H1 (cell line): ENCODE measurements at regions of chr14 and their contacts with region 1.

Region 1: GRCh38 chr14:68795597-68796417 is 2.9 kb upstream of the ZFP36L1 start:
- DNase-seq: peak; percentile 86 to 87
- H3K4me3 ChIP-seq: peak overlapping the region; percentile 79 to 99 (median 94)
- H3K27ac ChIP-seq: peak overlapping the region; percentile 98
- H3K4me1 ChIP-seq: peaks cover 5 to 14% (median 6%) of the 10 kb centered on the region in 4 experiments; a peak in 6 of 7 replicates
- H3K27me3 ChIP-seq: no peaks in the 10 kb centered on the region
- CTCF ChIP-seq: peak; percentile 56 to 75 (median 58)
- EP300 ChIP-seq: no peak
- POLR2A ChIP-seq: peak; percentile 83 to 86
- RAD21 ChIP-seq: peak; percentile 37 to 56

Region 2: GRCh38 chr14:68682166-68683103 is 113.4 kb before region 1 on chr14:
- CTCF ChIA-PET with region 1: no interaction called
- POLR2A ChIA-PET with region 1: no interaction called
- DNase-seq: no peak
- H3K4me3 ChIP-seq: no peak overlapping the region
- H3K27ac ChIP-seq: no peak overlapping the region
- H3K4me1 ChIP-seq: peaks cover 0 to 7% (median 4%) of the 10 kb centered on the region in 4 experiments; a peak in 2 of 7 replicates
- H3K27me3 ChIP-seq: 0 out of 7 replicates have a peak, but pooled peaks cover 0 to 2% (median 0%) of the 10 kb centered on the region in 4 experiments
- CTCF ChIP-seq: no peak
- EP300 ChIP-seq: no peak
- POLR2A ChIP-seq: no peak
- RAD21 ChIP-seq: no peak

Region 3: DNA sequence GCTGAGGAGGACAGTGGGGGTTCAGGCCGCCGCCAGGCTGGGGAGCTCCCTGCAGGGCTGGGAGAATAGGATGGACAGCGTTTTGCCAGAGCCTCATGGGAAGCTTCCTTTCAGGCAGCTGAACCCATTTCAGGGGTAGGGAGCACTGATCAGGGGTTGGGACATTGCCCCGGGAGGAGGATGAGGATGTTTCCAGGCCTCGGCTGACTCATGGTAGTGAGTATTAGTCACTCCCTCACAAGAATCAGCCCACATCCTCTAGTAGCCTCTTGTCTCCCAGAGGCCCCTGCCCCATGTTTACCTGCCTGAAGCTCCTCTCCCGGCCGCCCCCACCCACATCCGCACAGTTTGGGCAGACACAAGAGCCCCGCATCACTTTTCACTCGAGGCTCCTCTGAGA is 92.7 kb before region 1 on chr14:
- CTCF ChIA-PET with region 1: no interaction called
- POLR2A ChIA-PET with region 1: interaction called, 11 read pairs
- DNase-seq: no peak
- H3K4me3 ChIP-seq: no peak overlapping the region
- H3K27ac ChIP-seq: no peak overlapping the region
- H3K4me1 ChIP-seq: 0 out of 7 replicates have a peak, but pooled peaks cover 0 to 3% (median 1%) of the 10 kb centered on the region in 4 experiments
- H3K27me3 ChIP-seq: no peaks in the 10 kb centered on the region
- CTCF ChIP-seq: no peak
- EP300 ChIP-seq: no peak
- POLR2A ChIP-seq: no peak
- RAD21 ChIP-seq: no peak

Region 4: DNA sequence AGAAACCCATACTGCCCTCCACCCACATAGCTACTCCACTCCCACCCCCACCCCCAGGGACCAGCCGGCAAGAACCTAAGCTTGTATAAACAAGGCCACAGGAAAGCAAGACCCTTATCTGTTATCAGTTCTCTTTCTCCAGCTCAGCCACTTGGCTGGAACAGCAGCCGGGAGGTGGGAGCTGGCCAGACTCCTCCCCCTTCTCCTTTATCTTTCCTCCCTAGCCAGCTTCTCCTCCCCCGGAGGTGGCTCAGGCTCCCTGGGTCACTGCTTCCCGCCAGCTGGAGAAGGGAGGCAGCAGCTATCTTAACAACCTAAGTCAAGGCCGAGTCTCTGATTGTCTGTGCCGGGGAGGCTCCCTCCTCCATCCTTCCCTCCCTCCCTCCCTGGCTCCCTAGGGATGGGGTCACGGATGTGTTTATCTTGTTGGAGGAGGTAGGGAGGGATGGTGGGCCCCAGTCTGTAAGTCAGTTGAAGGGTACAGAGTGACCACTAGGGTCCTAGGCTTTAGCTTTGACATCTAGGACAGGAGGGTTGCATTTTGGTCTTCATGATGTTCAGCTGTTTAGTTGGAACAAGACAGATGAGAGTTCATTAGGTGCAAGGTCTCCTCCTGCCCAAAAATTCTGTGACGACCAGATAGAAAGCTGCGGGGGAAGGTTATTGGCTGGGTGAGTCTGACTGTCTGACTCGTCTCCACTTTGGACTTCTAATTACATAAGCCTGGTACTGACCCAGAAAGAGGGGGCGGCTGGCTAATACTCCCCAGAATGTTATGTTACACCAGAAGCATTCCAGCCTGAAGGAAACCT is 32.6 kb before region 1 on chr14:
- CTCF ChIA-PET with region 1: interaction called, 5 read pairs
- POLR2A ChIA-PET with region 1: interaction called, 197 read pairs
- DNase-seq: peak in 1 of 2 experiments; percentile 62
- H3K4me3 ChIP-seq: no peak overlapping the region
- H3K27ac ChIP-seq: no peak overlapping the region
- H3K4me1 ChIP-seq: peaks cover 2 to 12% (median 7%) of the 10 kb centered on the region in 4 experiments; a peak in 6 of 7 replicates
- H3K27me3 ChIP-seq: no peaks in the 10 kb centered on the region
- CTCF ChIP-seq: no peak
- EP300 ChIP-seq: no peak
- POLR2A ChIP-seq: no peak
- RAD21 ChIP-seq: no peak; a peak in 1 of 4 replicates

Region 5: DNA sequence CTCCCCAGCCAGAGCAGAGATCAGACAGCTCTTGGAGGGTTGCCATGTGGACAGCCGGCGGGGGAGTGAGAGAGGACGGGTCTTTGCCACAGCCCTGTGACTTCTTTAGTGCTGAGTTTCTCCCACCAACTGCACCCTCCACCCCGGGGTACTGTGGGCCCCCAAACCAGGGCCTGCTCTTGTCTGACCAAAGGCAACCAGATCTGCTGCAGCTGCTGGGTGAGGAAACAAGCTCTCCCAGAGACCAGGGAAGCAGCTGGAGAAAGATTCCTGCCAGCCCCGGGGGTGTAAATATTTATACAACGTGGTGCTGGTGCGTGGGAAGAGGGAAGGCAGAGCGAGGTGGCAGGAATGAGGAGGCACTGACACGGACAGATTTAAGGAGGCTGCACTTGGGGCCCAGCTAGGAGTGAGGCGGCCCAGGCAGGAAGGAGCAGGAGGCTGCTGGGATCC is 11.4 kb after region 1 on chr14:
- CTCF ChIA-PET with region 1: interaction called, 6 read pairs
- POLR2A ChIA-PET with region 1: interaction called, 222 read pairs
- DNase-seq: peak in 1 of 2 experiments; percentile 40
- H3K4me3 ChIP-seq: no peak overlapping the region
- H3K27ac ChIP-seq: no peak overlapping the region
- H3K4me1 ChIP-seq: peaks cover 0 to 4% (median under 1%) of the 10 kb centered on the region in 4 experiments; a peak in 3 of 7 replicates
- H3K27me3 ChIP-seq: no peaks in the 10 kb centered on the region
- CTCF ChIP-seq: no peak
- EP300 ChIP-seq: no peak
- POLR2A ChIP-seq: no peak
- RAD21 ChIP-seq: no peak

Region 6: DNA sequence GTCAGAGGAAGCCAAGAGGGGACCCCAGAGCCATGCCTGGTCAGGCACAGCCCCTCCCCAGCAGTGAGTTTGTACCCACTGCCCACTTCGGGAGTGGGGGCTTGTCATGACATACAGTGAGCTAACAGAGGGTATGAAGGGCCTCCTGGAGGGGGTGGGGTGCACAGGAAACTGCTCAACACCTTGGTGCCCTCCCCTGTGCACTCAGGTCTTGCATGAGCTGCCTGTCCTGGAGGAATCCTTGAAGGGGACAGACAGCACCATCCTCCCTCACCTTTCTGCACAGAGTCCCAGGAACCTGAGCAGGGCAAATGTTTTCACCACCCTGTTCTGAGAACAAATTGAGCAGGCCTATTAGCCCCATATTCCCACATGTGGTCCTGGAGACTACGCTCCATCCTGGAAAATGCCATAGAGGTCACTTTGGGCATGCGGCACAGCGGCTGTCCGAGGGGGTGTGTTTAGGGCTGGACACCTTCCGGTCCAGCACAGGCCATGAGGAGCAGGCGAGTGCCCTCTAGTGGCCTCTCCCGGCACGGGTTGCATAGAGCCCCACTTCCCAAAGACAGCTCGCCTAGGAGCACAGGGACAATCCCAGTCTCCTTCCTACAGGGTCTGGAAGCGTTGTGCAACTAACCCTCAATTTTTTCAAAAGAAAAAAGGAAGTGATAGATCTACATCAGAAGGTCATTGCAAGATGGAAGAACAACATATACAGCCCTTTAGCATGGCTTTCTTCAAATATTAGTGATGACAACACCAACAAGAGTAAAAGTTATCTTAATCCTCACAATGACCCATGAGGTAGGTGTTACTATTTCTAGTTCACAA is 28.9 kb after region 1 on chr14:
- CTCF ChIA-PET with region 1: interaction called, 54 read pairs
- POLR2A ChIA-PET with region 1: interaction called, 222 read pairs
- DNase-seq: peak; percentile 78 to 97
- H3K4me3 ChIP-seq: no peak overlapping the region
- H3K27ac ChIP-seq: no peak overlapping the region
- H3K4me1 ChIP-seq: peaks cover 0 to 7% (median 2%) of the 10 kb centered on the region in 4 experiments; a peak in 3 of 7 replicates
- H3K27me3 ChIP-seq: no peaks in the 10 kb centered on the region
- CTCF ChIP-seq: peak; percentile 93 to 98 (median 96)
- EP300 ChIP-seq: no peak
- POLR2A ChIP-seq: no peak
- RAD21 ChIP-seq: peak; percentile 88 to 89

Region 7: GRCh38 chr14:68862954-68863594 is 67.3 kb after region 1 on chr14:
- CTCF ChIA-PET with region 1: no interaction called
- POLR2A ChIA-PET with region 1: no interaction called
- DNase-seq: peak; percentile 47 to 86
- H3K4me3 ChIP-seq: no peak overlapping the region
- H3K27ac ChIP-seq: no peak overlapping the region
- H3K4me1 ChIP-seq: peaks cover 0 to 9% (median 0%) of the 10 kb centered on the region in 4 experiments; a peak in 2 of 7 replicates
- H3K27me3 ChIP-seq: no peaks in the 10 kb centered on the region
- CTCF ChIP-seq: peak; percentile 68 to 90 (median 80)
- EP300 ChIP-seq: no peak
- POLR2A ChIP-seq: no peak
- RAD21 ChIP-seq: peak; percentile 89 to 95